PC-3 (cell line): ENCODE measurements at regions of chr3 and their contacts with region 1.

Region 1: DNA sequence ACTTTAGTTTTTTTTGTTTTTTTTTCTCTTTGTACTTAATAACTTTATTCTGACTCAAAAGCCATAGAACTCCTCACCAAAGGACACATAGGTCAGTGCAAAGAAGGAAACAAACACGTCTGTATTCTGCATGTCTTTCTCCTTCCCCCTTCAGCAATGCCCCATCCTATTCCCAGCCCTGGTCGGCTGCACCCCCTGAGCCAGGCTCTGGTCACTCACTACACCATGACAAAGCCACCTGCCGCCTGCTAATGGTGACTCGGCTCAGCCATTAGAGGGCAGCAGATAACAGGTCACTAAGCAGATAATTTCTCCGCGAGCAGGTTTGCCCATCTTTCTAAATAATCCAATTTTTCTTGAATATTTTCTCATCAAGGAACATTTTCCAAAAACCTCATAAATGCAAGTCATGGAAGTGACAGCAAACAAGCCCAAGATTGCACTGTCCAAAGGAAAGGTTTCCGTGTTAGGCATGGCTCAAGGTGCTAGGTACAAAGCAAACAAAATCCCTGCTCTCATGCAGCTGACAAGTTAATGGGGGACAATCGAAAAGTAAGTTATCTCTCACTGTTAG is 37.8 kb downstream of the TM4SF4 start:
- DNase-seq: peak; percentile 84
- ATAC-seq: peak; percentile 90
- H3K4me3 ChIP-seq: no peak overlapping the region
- H3K27ac ChIP-seq: no peak overlapping the region
- H3K4me1 ChIP-seq: peaks cover 7% of the 10 kb centered on the region; the same call in 1 of the 2 replicates
- H3K27me3 ChIP-seq: no peaks in the 10 kb centered on the region
- CTCF ChIP-seq: peak; percentile 98

Region 2: GRCh38 chr3:149717391-149718056 is 205.2 kb after region 1 on chr3:
- CTCF ChIA-PET with region 1: no interaction called
- POLR2A ChIA-PET with region 1: no interaction called
- intact Hi-C with region 1: loop called (anchors 1 kb)
- DNase-seq: peak; percentile 88
- ATAC-seq: peak; percentile 83
- H3K4me3 ChIP-seq: no peak overlapping the region
- H3K27ac ChIP-seq: no peak overlapping the region
- H3K4me1 ChIP-seq: peaks cover 5% of the 10 kb centered on the region; the same call in 1 of the 2 replicates
- H3K27me3 ChIP-seq: no peaks in the 10 kb centered on the region
- CTCF ChIP-seq: peak; percentile 89

Region 3: GRCh38 chr3:149752051-149752787 is 239.9 kb after region 1 on chr3 and contains the start of gene COMMD2:
- CTCF ChIA-PET with region 1: no interaction called
- POLR2A ChIA-PET with region 1: no interaction called
- intact Hi-C with region 1: loop called (anchors 1 kb)
- DNase-seq: peak; percentile 96
- ATAC-seq: peak; percentile 98
- H3K4me3 ChIP-seq: peak within 1 kb of the TSS; percentile 94
- H3K27ac ChIP-seq: peak within 1 kb of the TSS; percentile 22; the same call in 1 of the 2 replicates
- H3K4me1 ChIP-seq: peaks cover 23% of the 10 kb centered on the region
- H3K27me3 ChIP-seq: no peaks in the 10 kb centered on the region
- CTCF ChIP-seq: peak; percentile 62
- total RNA-seq, gene COMMD2: 22.7 and 24.8 TPM in 2 replicates

Region 4: DNA sequence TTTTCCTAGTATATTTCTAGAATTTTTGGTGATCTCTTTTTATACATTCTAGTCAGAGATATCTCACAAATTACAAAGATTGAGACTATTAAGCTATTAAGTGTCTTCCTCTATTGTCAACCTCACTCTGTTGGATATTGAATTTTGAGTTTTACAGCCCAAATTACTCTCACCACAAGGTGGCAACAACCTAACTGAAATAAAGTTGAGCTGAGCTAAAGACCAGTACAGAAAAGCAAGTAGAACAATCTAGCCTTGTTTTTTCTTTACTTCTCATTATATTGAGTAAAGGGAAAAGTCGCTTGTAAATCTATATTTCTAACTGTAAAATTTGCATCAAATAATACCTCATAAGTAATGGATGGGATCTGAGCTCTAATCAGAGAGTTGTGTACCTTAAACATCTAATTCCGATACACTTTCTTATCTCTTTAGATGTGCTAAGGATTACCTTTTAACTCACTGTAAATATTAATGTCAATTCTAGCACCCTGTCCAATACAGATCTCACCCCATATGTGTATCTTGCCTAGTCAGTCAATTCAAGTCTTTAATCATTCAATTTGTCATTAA is 253.6 kb after region 1 on chr3:
- CTCF ChIA-PET with region 1: interaction called, 10 read pairs
- POLR2A ChIA-PET with region 1: no interaction called
- intact Hi-C with region 1: loop called (anchors 5 kb)
- DNase-seq: peak; percentile 59
- ATAC-seq: peak; percentile 59
- H3K4me3 ChIP-seq: no peak overlapping the region
- H3K27ac ChIP-seq: no peak overlapping the region
- H3K4me1 ChIP-seq: no peaks in the 10 kb centered on the region
- H3K27me3 ChIP-seq: 0 out of 2 replicates have a peak, but pooled peaks cover 4% of the 10 kb centered on the region
- CTCF ChIP-seq: peak; percentile 74

Region 5: GRCh38 chr3:149771652-149772271 is 259.5 kb after region 1 on chr3:
- CTCF ChIA-PET with region 1: interaction called, 10 read pairs
- POLR2A ChIA-PET with region 1: no interaction called
- intact Hi-C with region 1: loop called (anchors 5 kb)
- DNase-seq: peak; percentile 75
- ATAC-seq: peak; percentile 83
- H3K4me3 ChIP-seq: no peak overlapping the region
- H3K27ac ChIP-seq: no peak overlapping the region
- H3K4me1 ChIP-seq: no peaks in the 10 kb centered on the region
- H3K27me3 ChIP-seq: no peaks in the 10 kb centered on the region
- CTCF ChIP-seq: peak; percentile 88